ENCODE measurements at regions of chr1 and their contacts with region 1.

Region 1: DNA sequence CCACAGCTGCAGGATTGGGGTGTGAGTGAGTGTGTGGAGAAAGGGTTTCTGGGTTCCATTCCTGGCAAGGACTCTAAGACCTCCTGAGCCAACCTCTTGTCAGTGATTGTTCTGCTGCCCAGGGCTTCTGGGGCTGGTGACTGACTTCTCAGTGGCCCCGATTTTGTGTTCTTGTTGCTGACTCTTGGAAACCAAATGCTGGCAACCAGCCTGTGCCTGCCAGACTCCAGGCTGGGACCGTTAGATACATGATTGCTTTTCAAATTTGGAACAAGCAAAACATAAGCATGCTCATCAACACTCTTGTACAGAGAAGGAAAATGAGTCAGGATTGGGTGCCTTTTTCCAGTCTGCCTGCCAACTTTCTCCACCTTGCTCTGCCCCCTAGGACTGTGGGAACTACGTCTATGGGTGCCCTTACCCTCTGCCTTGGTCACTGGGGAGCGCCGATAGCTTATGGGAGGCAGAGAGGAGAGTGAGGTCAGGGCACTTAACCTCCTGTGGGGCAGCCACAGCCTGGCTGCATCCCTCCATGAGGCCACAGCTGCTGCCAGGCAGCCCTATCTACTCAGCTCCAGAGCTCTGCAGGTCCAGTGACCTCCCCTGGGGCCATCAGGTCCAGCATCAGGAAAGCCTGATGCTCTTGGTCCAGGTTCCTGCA is 39.3 kb upstream of the EPS8L3 start:
- DNase-seq: no peak
- H3K4me3 Mint-ChIP-seq: peak overlapping the region; percentile 77
- H3K27ac Mint-ChIP-seq: peak overlapping the region; percentile 98
- H3K4me1 Mint-ChIP-seq: peaks cover 76% of the 10 kb centered on the region
- H3K27me3 Mint-ChIP-seq: no peaks in the 10 kb centered on the region

Region 2: DNA sequence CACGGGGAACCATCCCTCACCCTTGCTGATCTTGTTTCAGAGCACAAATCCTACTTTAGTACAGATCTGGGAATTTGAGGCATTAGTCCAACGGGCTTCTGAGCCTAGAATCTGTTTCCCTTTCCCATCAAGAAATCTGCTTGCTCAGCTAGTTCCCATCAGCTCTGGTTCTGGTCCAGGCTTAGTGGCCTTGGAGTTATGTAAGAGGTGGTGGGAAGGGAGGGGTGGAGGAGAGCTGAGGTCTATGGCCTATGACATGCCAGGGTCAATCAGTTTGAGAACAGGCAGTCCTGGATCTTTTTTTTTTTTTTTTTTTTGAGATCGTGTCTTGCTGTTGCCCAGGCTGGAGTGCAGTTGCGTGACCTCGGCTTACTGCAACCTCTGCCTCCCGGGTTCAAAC is 111.3 kb before region 1 on chr1:
- intact Hi-C with region 1: no loop called
- DNase-seq: no peak
- H3K4me3 Mint-ChIP-seq: no peak overlapping the region
- H3K27ac Mint-ChIP-seq: no peak overlapping the region
- H3K4me1 Mint-ChIP-seq: peaks cover 11% of the 10 kb centered on the region
- H3K27me3 Mint-ChIP-seq: no peaks in the 10 kb centered on the region

Region 3: DNA sequence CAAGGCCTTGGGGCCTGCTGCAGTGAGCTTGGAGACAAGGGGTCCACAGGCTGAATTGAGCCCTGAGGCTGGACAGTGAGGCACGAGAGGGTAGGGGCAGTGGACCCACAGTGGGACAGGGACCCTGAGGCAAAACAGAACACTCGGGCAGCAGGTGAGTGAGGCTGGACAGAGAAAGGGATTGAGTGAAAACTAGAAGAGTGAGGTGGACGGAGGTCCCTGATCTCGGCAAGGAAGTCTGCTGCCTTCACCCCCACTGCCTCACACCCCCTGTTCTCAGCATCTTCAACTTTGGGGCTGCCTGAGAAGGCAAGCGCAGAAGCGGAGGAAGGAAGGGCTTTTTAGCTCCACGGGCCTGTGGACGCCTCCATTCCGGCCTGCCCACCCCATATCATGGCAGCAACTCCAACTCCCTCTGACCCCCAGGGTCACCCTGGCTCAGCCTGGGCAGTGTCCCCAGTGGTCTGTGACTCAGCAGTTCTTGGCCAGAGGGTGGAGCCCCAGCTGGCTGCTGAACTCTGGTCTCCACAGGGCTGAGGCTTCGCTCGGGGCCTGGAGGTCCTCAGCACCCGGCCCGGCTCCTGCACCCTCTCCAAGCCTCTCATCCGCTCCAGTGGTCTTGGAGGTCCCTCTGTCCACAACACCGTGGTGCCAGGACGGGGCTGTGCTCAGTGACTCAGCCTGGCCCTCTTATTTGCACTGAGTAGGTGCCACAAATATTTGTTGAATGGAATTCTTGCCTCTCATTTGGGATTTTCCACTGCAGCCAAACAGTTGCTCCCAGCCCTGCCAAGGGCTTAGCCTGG is 20.7 kb after region 1 on chr1:
- intact Hi-C with region 1: loop called (anchors 1 kb)
- DNase-seq: no peak
- H3K4me3 Mint-ChIP-seq: no peak overlapping the region
- H3K27ac Mint-ChIP-seq: peak overlapping the region; percentile 84
- H3K4me1 Mint-ChIP-seq: peaks cover 67% of the 10 kb centered on the region
- H3K27me3 Mint-ChIP-seq: no peaks in the 10 kb centered on the region

Region 4: GRCh38 chr1:109890115-109890953 is 87.3 kb after region 1 on chr1:
- intact Hi-C with region 1: loop called (anchors 1 kb)
- DNase-seq: no peak
- H3K4me3 Mint-ChIP-seq: peak overlapping the region; percentile 18
- H3K27ac Mint-ChIP-seq: peak overlapping the region; percentile 94
- H3K4me1 Mint-ChIP-seq: peaks cover 39% of the 10 kb centered on the region
- H3K27me3 Mint-ChIP-seq: no peaks in the 10 kb centered on the region

Region 5: DNA sequence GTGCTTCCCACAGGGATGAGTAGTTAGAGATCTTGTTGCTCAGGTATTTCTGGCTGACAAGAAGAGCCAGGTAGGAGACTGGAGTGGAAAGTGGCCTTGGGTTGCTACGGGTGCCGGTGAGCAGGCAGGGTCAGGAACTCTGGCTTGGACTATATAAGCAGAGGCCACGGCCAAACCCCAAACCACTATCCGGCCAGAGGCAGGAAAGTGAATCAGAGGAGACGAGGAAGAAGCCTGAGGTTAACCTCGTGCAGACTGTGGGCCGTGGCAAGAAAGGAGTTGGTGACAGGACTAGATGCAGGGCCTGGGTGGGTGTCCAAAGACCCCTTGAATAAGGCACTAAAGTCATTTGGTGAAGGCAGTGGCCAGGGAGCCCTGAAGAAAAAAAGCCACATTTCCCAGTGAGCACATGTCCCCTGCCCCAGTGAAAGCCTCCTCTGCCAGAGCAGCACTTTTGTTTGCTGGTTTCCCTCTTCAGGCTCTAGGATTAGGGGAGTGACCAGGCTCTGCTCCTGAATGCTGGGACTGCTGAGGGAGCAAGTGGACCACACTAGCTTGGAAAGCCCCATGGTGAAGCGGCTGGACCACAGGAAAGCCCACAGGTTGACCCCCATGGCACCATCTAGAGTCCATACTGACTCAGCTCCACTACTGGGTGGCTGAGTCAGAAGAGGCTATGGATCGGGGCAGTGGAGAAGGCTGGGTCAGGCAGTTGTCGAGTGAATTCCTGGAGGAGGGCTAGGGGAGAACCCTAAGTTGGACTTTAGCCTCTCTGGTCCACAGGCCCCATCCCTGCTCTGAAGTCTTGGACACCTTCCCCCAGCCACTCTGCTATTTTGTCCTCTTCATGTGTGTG is 131.1 kb after region 1 on chr1:
- intact Hi-C with region 1: no loop called
- DNase-seq: no peak
- H3K4me3 Mint-ChIP-seq: no peak overlapping the region
- H3K27ac Mint-ChIP-seq: peak overlapping the region; percentile 75
- H3K4me1 Mint-ChIP-seq: peaks cover 7% of the 10 kb centered on the region
- H3K27me3 Mint-ChIP-seq: peaks cover 3% of the 10 kb centered on the region

Region 6: DNA sequence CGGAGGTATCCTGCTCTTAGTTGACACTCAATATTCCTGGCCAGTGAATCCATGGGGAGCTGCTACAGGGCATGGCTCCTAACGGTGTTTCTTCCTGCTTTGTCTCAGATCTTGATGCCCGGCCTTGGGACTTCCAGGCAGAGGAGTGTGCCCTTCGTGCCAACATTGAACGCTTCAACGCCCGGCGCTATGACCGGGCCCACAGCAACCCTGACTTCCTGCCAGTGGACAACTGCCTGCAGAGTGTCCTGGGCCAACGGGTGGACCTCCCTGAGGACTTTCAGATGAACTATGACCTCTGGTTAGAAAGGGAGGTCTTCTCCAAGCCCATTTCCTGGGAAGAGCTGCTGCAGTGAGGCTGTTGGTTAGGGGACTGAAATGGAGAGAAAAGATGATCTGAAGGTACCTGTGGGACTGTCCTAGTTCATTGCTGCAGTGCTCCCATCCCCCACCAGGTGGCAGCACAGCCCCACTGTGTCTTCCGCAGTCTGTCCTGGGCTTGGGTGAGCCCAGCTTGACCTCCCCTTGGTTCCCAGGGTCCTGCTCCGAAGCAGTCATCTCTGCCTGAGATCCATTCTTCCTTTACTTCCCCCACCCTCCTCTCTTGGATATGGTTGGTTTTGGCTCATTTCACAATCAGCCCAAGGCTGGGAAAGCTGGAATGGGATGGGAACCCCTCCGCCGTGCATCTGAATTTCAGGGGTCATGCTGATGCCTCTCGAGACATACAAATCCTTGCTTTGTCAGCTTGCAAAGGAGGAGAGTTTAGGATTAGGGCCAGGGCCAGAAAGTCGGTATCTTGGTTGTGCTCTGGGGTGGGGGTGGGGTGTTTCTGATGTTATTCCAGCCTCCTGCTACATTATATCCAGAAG is 250.8 kb after region 1 on chr1:
- intact Hi-C with region 1: no loop called
- DNase-seq: peak; percentile 40
- H3K4me3 Mint-ChIP-seq: no peak overlapping the region
- H3K27ac Mint-ChIP-seq: no peak overlapping the region
- H3K4me1 Mint-ChIP-seq: no peaks in the 10 kb centered on the region
- H3K27me3 Mint-ChIP-seq: no peaks in the 10 kb centered on the region

Region 7: DNA sequence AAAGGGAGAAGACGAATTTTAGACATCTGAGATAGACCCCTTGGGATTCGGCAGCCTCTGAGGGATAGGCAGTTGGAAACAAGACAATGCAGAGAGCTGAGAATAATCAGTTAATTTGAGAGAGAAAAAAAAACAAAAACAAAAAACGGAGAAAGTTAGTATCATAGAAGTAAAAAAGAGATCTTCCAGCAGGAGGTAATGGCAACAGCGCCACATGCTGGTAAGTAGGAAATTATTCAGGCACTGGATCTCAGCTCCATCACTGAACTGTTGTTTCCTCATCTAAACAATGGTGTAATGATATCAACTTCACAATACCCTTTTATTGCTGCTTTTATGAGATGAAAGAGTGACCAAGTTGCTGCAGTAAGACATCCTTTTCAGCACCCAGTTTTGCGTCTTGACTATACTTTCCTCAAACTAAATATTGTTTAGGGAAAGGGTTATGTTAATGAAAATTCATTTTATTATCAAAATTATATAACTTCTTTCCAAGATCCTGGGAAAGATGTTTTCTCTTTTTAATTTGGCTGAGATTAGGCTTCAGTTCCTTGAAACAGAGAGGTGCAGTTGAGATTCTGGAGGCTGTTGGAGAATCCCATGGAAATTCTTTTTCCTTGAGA is 963.1 kb after region 1 on chr1:
- intact Hi-C with region 1: no loop called
- DNase-seq: peak; percentile 31
- H3K4me3 Mint-ChIP-seq: no peak overlapping the region
- H3K27ac Mint-ChIP-seq: no peak overlapping the region
- H3K4me1 Mint-ChIP-seq: peaks cover 6% of the 10 kb centered on the region
- H3K27me3 Mint-ChIP-seq: peaks cover 57% of the 10 kb centered on the region